ENCODE measurements at regions of chr2 and their contacts with region 1.

Region 1: DNA sequence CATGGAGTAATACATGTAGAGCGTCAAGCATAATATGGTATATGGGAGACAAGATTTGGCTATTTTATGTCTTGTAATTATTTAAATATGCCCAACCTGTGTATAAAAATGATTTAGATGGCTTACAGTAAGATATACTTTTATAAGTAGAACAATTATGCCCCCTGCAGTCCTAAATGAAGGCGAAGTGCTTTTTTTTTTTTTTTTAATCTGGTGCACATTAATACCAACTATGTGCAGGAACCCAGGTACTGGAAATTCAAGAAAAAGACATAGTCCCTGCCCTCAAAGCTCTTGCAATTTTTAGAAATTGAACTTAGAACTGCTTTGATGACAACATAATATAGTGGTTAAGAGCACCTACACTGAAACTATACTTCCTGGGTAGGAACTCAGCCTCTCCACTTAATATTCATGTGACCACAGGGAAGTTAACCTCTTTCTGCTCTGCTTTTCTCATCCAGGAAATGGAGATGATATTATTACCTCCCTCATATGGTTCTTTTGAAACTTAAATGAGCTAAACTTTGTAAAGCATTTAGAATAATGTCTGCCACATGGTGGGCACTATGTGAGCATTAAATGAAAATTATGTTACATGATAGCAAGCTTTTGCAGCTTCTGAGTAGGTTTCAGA is 38.1 kb downstream of the AFTPH start:
- DNase-seq: no peak
- ATAC-seq: peak; percentile 70
- H3K4me3 ChIP-seq: no peak overlapping the region
- H3K27ac ChIP-seq: no peak overlapping the region
- H3K4me1 ChIP-seq: peaks cover 19% of the 10 kb centered on the region
- H3K27me3 ChIP-seq: no peaks in the 10 kb centered on the region
- CTCF ChIP-seq: peak; percentile 15 to 52 (median 39); a peak in 5 of 6 replicates
- EP300 ChIP-seq: no peak
- POLR2A ChIP-seq: no peak
- RAD21 ChIP-seq: peak; percentile 58

Region 2: GRCh38 chr2:64516628-64517510 is 45.4 kb before region 1 on chr2:
- CTCF ChIA-PET with region 1: interaction called, 22 read pairs
- POLR2A ChIA-PET with region 1: interaction called, 3 read pairs
- RAD21 ChIA-PET with region 1: no interaction called
- SMC1A ChIA-PET with region 1: interaction called, 4 read pairs
- in situ Hi-C with region 1: no loop called
- intact Hi-C with region 1: loop called (anchors 1 kb)
- DNase-seq: no peak
- ATAC-seq: no peak
- H3K4me3 ChIP-seq: no peak overlapping the region
- H3K27ac ChIP-seq: no peak overlapping the region
- H3K4me1 ChIP-seq: no peaks in the 10 kb centered on the region
- H3K27me3 ChIP-seq: peaks cover 0 to 6% of the 10 kb centered on the region in 2 experiments; a peak in 1 of 4 replicates
- CTCF ChIP-seq: no peak
- EP300 ChIP-seq: no peak
- POLR2A ChIP-seq: no peak
- RAD21 ChIP-seq: no peak

Region 3: GRCh38 chr2:64533882-64534281 is 28.4 kb before region 1 on chr2:
- CTCF ChIA-PET with region 1: interaction called, 3 read pairs
- POLR2A ChIA-PET with region 1: no interaction called
- RAD21 ChIA-PET with region 1: interaction called, 3 read pairs
- SMC1A ChIA-PET with region 1: interaction called, 13 read pairs
- in situ Hi-C with region 1: no loop called
- intact Hi-C with region 1: no loop called
- DNase-seq: no peak
- ATAC-seq: peak; percentile 13
- H3K4me3 ChIP-seq: peak overlapping the region; percentile 38; the same call in 1 of the 2 replicates
- H3K27ac ChIP-seq: peak overlapping the region; percentile 17; the same call in 1 of the 2 replicates
- H3K4me1 ChIP-seq: peaks cover 35% of the 10 kb centered on the region
- H3K27me3 ChIP-seq: no peaks in the 10 kb centered on the region
- CTCF ChIP-seq: no peak
- EP300 ChIP-seq: no peak
- POLR2A ChIP-seq: no peak
- RAD21 ChIP-seq: no peak

Region 4: GRCh38 chr2:64538764-64539433 is 23.4 kb before region 1 on chr2:
- CTCF ChIA-PET with region 1: interaction called, 9 read pairs
- POLR2A ChIA-PET with region 1: no interaction called
- RAD21 ChIA-PET with region 1: interaction called, 5 read pairs
- SMC1A ChIA-PET with region 1: interaction called, 41 read pairs
- in situ Hi-C with region 1: no loop called
- intact Hi-C with region 1: no loop called
- DNase-seq: peak; percentile 49
- ATAC-seq: peak; percentile 57
- H3K4me3 ChIP-seq: peak overlapping the region; percentile 14; the same call in 1 of the 2 replicates
- H3K27ac ChIP-seq: peak overlapping the region; percentile 71
- H3K4me1 ChIP-seq: peaks cover 48% of the 10 kb centered on the region; the same call in 1 of the 2 replicates
- H3K27me3 ChIP-seq: no peaks in the 10 kb centered on the region
- CTCF ChIP-seq: no peak
- EP300 ChIP-seq: no peak
- POLR2A ChIP-seq: no peak
- RAD21 ChIP-seq: no peak

Region 5: DNA sequence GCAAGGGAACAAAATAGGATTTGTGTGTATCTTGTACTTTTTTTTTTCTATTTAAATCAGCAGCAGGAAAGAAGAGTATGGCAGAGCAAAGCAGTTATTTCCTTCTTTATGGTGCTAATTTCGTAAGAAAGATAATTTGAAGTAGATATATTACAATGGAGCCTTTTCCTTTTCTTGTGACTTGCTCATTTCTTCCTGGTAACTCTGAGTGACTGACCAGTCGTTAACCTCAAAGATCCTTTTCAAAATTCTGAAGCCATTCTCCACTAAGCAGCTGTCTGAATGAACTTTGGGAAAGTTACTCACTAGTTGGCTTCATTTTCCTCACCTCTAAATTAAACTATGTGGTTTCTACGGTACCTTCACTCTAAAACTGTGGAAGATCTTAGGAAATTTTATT is 13.5 kb before region 1 on chr2:
- CTCF ChIA-PET with region 1: interaction called, 29 read pairs
- POLR2A ChIA-PET with region 1: no interaction called
- RAD21 ChIA-PET with region 1: interaction called, 3 read pairs
- SMC1A ChIA-PET with region 1: interaction called, 41 read pairs
- in situ Hi-C with region 1: no loop called
- intact Hi-C with region 1: no loop called
- DNase-seq: no peak
- ATAC-seq: no peak
- H3K4me3 ChIP-seq: no peak overlapping the region
- H3K27ac ChIP-seq: no peak overlapping the region
- H3K4me1 ChIP-seq: no peaks in the 10 kb centered on the region
- H3K27me3 ChIP-seq: no peaks in the 10 kb centered on the region
- CTCF ChIP-seq: no peak
- EP300 ChIP-seq: no peak
- POLR2A ChIP-seq: no peak
- RAD21 ChIP-seq: no peak